OCI-LY7 (cell line): ENCODE measurements at regions of chr2 and their contacts with region 1.

Region 1: DNA sequence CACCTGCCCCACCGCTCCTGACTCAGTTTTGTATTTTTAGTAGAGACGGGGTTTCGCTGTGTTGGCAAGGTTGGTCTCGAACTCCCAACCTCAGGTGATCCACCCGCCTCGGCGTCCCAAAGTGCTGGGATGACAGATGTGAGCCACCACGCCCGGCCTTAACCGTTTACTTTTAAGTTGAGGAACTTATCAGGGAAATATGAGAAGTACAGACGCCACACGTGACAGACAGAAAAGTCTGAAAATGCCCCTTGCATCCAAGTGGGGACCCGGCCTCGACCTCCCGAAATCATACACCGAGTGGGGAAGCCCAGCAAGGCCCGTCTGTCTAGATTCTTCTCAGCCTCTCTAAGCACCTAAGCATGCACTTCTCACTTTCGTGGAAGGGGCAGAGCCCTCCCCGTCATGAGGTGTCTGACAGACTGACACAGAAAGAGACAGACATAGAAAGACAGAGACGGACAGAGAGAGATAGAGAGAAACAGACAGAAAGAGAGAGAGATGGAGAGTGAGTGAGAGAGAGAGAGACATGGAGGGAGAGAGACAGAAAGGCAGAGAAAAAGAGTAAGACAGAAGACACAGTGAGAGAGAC is 107.3 kb upstream of the ANKRD30BL start:
- DNase-seq: no peak
- H3K4me3 ChIP-seq: no peak overlapping the region
- H3K27ac ChIP-seq: no peak overlapping the region
- H3K4me1 ChIP-seq: peaks cover 35% of the 10 kb centered on the region
- CTCF ChIP-seq: no peak

Region 2: DNA sequence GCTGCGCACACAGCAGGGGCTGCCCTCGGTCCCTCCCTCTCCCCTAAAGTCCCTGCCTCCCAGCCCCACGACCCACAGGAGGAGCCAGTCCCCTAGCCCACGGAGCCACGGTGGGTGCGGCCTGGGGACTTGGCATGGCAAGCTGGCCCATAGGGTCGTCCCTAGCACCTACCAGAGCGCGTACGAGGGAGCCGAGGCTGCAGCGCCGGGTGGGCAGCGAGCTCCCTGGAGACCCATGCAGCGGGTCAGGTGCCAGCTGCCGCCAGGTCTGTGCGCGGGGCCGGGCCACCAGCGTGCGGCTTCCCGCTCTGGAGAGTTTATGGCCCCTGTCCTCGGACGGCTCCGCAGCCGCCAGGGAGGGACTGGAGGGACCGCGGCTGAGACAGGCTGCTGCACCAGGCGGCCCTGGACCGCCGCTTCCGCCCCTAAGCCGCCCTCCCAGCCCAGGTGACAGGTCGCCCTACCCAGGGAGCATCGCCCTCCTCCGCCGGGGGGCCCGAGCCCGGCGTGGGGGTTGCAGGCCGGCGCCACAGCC is 467.8 kb before region 1 on chr2:
- CTCF ChIA-PET with region 1: no interaction called
- POLR2A ChIA-PET with region 1: no interaction called
- intact Hi-C with region 1: no loop called
- DNase-seq: no peak
- H3K4me3 ChIP-seq: peak overlapping the region; percentile 40
- H3K27ac ChIP-seq: no peak overlapping the region
- H3K4me1 ChIP-seq: peaks cover 4% of the 10 kb centered on the region
- CTCF ChIP-seq: no peak

Region 3: GRCh38 chr2:132448771-132449170 is 179.7 kb after region 1 on chr2:
- CTCF ChIA-PET with region 1: no interaction called
- POLR2A ChIA-PET with region 1: no interaction called
- intact Hi-C with region 1: loop called (anchors 2 kb)
- DNase-seq: peak; percentile 16
- H3K4me3 ChIP-seq: no peak overlapping the region
- H3K27ac ChIP-seq: no peak overlapping the region
- H3K4me1 ChIP-seq: no peaks in the 10 kb centered on the region
- CTCF ChIP-seq: peak; percentile 72

Region 4: GRCh38 chr2:132547074-132547687 is 278.2 kb after region 1 on chr2:
- CTCF ChIA-PET with region 1: no interaction called
- POLR2A ChIA-PET with region 1: no interaction called
- intact Hi-C with region 1: loop called (anchors 2 kb)
- DNase-seq: peak; percentile 76
- H3K4me3 ChIP-seq: no peak overlapping the region
- H3K27ac ChIP-seq: no peak overlapping the region
- H3K4me1 ChIP-seq: no peaks in the 10 kb centered on the region
- CTCF ChIP-seq: peak; percentile 90

Region 5: GRCh38 chr2:132645722-132646535 is 376.9 kb after region 1 on chr2:
- CTCF ChIA-PET with region 1: no interaction called
- POLR2A ChIA-PET with region 1: no interaction called
- intact Hi-C with region 1: loop called (anchors 2 kb)
- DNase-seq: peak; percentile 94
- H3K4me3 ChIP-seq: peak overlapping the region; percentile 58
- H3K27ac ChIP-seq: peak overlapping the region; percentile 85
- H3K4me1 ChIP-seq: peaks cover 81% of the 10 kb centered on the region
- CTCF ChIP-seq: no peak

Region 6: DNA sequence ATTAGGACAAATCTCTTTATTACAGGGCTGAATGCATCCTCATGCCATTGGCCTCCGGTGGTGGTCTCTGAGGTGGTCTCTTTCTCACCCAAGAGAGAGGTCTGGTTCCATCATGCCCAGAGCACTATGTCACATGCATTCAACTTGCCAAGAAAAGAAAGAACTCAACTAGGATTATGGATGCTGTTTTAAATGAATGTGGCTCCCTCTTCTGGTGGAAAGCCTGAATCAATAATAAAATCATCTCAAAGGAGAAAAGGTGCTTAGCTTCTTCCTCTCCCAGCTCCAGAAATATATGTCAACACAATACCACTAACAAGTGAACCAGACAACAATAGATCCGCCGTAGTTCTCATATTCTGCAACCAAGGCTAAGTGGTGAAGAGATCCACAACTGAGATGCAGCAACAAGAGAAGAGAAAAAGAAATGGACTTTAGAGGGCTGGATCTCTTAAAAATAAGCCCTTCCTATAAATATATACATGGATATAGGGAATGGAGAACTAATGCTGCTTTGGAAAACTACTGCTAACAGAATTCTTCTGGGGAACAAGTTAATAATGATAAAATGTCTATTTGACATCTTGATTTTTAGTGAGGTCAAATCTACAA is 902.5 kb after region 1 on chr2:
- CTCF ChIA-PET with region 1: no interaction called
- POLR2A ChIA-PET with region 1: no interaction called
- intact Hi-C with region 1: loop called (anchors 1 kb)
- DNase-seq: peak; percentile 54
- H3K4me3 ChIP-seq: no peak overlapping the region
- H3K27ac ChIP-seq: no peak overlapping the region
- H3K4me1 ChIP-seq: no peaks in the 10 kb centered on the region
- CTCF ChIP-seq: peak; percentile 87